ENCODE measurements at regions of chr22 and their contacts with region 1.

Region 1: DNA sequence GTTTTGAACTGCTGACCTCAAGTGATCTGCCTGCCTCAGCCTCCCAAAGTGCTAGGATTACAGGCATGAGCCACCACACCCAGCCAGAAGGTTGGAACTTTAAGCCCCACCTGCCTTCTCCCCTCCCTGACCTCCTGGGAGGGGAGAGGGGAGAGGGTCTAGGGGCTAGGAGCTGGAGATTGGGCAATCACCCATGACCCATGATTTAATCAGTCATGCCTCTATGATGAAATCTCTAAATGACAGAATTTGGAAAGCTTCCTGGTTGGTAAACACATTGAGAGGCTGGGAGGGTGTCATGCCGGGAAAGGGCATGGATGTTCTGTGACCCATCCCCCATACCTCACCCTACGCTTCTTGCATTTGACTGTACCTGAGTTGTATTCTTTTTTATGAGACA is 17.1 kb upstream of the TFIP11 start:
- DNase-seq: no peak
- ATAC-seq: no peak
- H3K4me3 ChIP-seq: no peak overlapping the region
- H3K27ac ChIP-seq: no peak overlapping the region
- H3K4me1 ChIP-seq: no peaks in the 10 kb centered on the region
- H3K27me3 ChIP-seq: no peaks in the 10 kb centered on the region
- CTCF ChIP-seq: no peak
- POLR2A ChIP-seq: no peak
- RAD21 ChIP-seq: no peak

Region 2: GRCh38 chr22:26550498-26551033 is 21.2 kb after region 1 on chr22:
- CTCF ChIA-PET with region 1: no interaction called
- POLR2A ChIA-PET with region 1: no interaction called
- dilution Hi-C with region 1: no loop called
- in situ Hi-C with region 1: no loop called
- intact Hi-C with region 1: loop called (anchors 1 kb)
- DNase-seq: peak; percentile 98
- ATAC-seq: peak; percentile 81
- H3K4me3 ChIP-seq: no peak overlapping the region
- H3K27ac ChIP-seq: peak overlapping the region; percentile 23
- H3K4me1 ChIP-seq: peaks cover 23% of the 10 kb centered on the region
- H3K27me3 ChIP-seq: no peaks in the 10 kb centered on the region
- CTCF ChIP-seq: no peak
- POLR2A ChIP-seq: no peak; the same call in 1 of the 2 replicates
- RAD21 ChIP-seq: no peak; the same call in 1 of the 2 replicates